Body of pancreas (tissue), 4 donors: ENCODE measurements at regions of chr19 and their contacts with region 1.

Region 1: DNA sequence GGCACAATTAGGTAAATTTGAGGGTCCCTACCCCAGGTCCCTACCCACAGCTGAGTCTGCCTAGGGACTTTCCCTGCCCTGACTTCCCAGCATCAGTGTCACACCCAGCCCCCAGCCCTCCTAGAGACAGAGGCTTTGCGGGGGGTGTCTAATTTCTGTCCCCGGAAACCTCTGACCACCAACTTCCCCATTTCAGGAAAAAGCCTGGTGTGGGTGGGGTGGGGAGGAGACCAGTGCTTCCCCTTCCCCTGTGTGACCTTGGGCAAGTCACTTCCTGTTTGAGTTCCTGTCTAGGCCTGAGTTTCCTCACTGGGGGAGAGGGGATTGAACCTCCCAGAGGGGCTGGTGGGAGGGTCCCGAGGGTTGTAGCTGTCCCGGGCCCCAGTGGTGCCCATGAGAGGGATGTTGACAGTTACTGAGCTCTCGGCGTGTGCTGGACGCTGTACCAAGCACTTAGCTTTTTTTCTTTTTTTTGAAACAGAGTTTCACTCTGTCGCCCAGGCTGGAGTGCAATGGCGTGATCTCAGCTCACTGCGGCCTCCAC is 7.9 kb downstream of the VASP start:
- DNase-seq: peak in 1 of 4 donors; percentile 72
- ATAC-seq: peak; percentile 15
- H3K4me3 ChIP-seq: no peak overlapping the region
- H3K27ac ChIP-seq: peak overlapping the region; percentile 48 to 64 (median 56)
- H3K4me1 ChIP-seq: peaks cover 26% of the 10 kb centered on the region
- H3K27me3 ChIP-seq: no peaks in the 10 kb centered on the region
- CTCF ChIP-seq: no peak
- POLR2A ChIP-seq: no peak

Region 2: GRCh38 chr19:45234089-45234869 is 280.9 kb before region 1 on chr19:
- intact Hi-C with region 1: no loop called
- DNase-seq: no peak
- ATAC-seq: peak; percentile 31
- H3K4me3 ChIP-seq: no peak overlapping the region
- H3K27ac ChIP-seq: no peak overlapping the region
- H3K4me1 ChIP-seq: no peaks in the 10 kb centered on the region
- H3K27me3 ChIP-seq: peaks cover 0 to 12% of the 10 kb centered on the region in 2 donors
- CTCF ChIP-seq: no peak
- POLR2A ChIP-seq: no peak

Region 3: DNA sequence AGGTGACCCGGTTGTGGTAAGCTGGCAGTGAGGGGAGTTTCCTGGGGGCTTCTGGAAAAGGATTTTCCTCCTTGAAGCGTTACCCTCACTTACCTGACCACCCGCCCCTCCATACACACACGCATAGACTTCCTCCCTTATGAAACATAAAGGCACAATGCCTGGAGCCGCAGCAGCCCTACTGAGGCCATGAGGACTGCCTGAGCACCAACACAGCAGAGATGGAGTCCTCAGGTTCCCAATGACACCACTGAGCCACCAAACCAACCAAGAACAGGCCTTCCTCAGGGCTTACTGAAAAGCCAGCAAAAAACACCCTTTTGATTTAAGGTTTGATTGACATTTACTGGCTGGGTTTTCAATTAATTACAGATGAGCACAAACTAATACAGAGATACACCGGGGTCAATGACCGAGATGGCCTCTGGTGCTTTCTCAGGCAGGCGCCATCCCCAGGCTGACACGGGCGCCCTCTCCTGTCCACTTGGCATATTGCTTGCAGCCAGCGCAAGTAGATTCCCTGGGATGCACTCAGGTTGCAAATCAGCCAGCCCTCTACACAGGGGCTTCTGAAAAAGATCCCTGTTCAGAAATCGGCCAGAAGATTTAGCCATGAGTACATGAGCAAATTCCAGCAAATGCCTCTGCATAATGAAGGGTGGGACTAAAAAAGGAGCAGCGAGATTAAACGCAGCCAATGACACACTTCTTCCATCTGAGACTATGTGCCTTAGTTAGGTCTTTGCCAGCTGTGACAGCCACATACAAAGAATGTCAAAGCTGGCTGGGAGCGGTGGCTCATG is 54.7 kb after region 1 on chr19:
- intact Hi-C with region 1: loop called (anchors 10 kb)
- DNase-seq: peak; percentile 52 to 70 (median 67)
- ATAC-seq: peak; percentile 76
- H3K4me3 ChIP-seq: no peak overlapping the region
- H3K27ac ChIP-seq: no peak overlapping the region
- H3K4me1 ChIP-seq: peaks cover 5% of the 10 kb centered on the region
- H3K27me3 ChIP-seq: no peaks in the 10 kb centered on the region
- CTCF ChIP-seq: peak; percentile 54 to 72 (median 70)
- POLR2A ChIP-seq: no peak